Astrocyte of the cerebellum (primary cell): ENCODE measurements at regions of chr5 and their contacts with region 1.

Region 1: DNA sequence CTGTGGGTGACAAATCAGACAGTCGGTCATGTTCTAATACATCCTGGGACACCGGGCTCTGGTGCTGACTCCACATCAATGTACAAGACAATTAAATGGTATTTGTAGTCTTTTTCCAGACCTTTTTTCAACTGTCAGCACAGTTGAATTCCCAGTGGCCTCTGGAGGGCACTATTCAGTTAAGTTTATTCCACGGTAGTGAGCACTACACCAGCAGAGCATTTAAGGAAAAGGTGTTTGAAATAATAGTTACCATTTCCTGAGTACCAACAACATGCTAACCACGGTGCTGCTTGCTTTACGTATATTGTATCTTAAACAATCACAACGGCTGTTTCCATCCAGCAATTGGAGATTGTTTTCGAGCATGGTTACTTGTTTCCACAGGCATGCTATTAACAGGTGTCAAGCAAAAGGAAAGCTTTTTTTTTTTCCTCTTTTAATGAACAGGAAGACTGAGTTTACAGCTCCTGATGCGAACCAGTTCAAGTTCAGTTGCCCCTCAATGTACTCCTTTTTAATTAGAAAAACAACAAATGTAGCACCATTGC is 186.7 kb downstream of the PDZD2 start:
- DNase-seq: peak; percentile 55
- H3K4me3 ChIP-seq: no peak overlapping the region
- CTCF ChIP-seq: peak; percentile 70

Region 2: DNA sequence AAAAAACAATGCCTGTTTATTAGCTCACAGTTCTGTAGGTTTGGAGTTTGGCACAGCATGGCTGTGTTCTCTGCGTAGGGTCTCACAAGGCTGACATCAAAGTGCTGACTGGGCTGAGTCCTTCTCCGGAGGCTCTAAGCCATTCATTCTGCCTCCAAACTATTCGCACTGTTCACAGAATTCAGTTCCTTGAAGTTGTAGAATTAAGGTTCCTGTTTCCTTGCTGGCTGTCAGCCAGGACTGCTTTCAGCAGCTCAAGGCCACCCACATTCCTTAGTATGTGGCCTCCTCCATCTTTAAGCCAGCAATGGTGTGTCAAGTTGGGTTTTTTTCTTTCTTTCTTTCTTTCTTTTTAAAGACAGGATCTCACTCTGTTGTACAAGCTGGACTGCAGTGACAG is 470.3 kb before region 1 on chr5:
- in situ Hi-C with region 1: no loop called
- DNase-seq: no peak
- H3K4me3 ChIP-seq: no peak overlapping the region
- CTCF ChIP-seq: no peak

Region 3: DNA sequence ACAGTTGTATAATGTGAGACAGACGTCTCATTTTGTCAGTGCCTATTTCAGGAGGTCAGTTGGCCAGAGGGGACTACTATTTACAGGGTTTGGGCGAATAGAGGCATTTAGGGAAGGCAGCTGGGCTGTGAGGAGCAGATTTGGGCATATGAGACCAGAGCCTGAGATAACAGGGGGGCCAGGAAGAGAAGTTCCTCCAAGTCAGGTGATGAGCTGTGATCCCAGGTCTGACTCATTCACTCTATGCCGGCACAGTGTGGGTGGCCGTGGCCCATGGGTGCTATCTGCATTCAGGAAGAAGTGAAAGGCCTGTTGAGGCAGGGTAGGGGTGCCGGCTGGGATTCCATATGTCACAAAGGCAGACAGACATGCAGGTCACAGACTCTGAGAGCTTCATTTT is 43.8 kb before region 1 on chr5:
- in situ Hi-C with region 1: no loop called
- DNase-seq: no peak
- H3K4me3 ChIP-seq: no peak overlapping the region
- CTCF ChIP-seq: no peak

Region 4: DNA sequence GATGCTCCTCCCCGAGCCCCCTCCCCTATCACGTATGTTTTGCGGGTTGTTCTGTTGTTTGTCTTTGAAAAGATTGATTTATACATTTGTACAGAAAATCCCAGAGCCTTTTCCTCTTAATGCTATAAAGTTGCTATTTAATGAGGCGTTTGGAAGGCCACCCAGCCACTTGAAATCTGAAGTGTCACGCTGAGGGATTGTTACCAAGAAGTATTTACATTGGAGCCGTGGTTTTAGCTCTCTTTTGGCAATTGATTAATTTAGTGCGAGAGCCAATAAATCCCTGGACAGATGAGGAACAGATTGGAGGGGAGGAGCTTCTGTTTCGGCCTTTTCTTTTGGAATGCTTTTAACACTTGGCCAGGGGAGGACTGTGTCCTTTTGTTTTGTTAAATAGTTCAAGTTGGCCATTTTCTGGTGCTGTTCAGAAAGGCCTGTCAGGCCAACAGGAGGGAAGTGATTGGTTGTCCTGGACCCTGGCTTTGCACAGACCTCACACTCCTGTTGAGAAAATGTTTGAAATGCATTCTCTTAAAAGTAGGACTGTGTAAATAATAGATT is 63.5 kb after region 1 on chr5:
- in situ Hi-C with region 1: loop called (anchors 5 kb)
- DNase-seq: no peak
- H3K4me3 ChIP-seq: no peak overlapping the region
- CTCF ChIP-seq: no peak

Region 5: DNA sequence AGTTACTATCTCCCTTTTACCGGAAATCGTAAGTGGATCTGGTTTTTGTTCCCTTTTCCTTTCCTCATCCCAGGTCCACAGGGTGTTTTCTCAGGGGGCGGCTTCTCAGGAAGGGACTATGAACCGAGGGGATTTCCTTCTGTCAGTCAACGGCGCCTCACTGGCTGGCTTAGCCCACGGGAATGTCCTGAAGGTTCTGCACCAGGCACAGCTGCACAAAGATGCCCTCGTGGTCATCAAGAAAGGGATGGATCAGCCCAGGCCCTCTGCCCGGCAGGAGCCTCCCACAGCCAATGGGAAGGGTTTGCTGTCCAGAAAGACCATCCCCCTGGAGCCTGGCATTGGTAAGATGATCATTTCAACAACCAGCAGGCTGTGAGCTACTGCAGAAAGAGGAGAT is 272.7 kb after region 1 on chr5:
- in situ Hi-C with region 1: loop called (anchors 5 kb)
- DNase-seq: no peak
- H3K4me3 ChIP-seq: no peak overlapping the region
- CTCF ChIP-seq: no peak